ENCODE measurements at regions of chr9 and their contacts with region 1.

Region 1: DNA sequence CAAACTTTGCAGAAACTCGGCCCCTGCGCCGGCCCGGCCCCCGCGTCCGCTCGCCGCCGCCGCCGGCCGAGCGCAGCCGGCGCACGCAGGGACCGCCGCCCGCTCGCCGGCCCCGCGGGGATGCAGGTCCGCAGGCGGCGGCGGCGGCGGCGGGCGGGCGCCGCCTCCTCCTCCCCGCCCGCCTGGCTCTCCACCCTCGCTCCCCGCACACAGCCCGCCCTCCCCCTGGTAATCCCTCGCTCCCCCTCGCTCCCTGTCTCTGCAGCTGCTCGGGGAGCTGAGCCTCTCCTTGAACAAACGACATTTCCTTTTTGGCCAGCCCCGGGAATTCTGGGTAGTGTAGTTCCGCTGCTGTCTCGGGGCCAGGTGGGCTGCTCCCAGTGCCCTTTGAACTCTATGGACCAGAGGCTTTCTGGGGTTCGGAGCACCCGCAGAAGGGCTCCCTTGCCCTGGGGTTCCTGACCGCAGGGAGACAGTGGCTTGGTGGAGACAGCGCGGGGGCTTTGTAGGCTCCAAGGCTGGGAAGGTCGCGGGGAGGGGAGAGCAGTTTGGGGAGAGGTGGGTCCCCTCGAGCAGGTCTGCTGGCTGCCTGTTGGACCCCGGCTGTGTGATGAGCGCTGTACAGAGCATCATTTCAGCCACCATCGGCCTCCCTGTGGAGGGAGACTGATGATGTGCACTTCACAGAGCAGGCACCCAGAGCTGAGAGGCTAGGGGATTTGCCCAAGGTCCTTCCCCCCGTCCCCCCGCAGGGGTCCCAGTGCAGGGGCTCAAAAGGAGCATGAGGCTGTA is 1.8 kb upstream of the FAM78A start:
- DNase-seq: peak; percentile 86
- H3K4me3 ChIP-seq: peak overlapping the region; percentile 90
- H3K27ac ChIP-seq: peak overlapping the region; percentile 54
- H3K4me1 ChIP-seq: peaks cover 17% of the 10 kb centered on the region
- CTCF ChIP-seq: no peak

Region 2: DNA sequence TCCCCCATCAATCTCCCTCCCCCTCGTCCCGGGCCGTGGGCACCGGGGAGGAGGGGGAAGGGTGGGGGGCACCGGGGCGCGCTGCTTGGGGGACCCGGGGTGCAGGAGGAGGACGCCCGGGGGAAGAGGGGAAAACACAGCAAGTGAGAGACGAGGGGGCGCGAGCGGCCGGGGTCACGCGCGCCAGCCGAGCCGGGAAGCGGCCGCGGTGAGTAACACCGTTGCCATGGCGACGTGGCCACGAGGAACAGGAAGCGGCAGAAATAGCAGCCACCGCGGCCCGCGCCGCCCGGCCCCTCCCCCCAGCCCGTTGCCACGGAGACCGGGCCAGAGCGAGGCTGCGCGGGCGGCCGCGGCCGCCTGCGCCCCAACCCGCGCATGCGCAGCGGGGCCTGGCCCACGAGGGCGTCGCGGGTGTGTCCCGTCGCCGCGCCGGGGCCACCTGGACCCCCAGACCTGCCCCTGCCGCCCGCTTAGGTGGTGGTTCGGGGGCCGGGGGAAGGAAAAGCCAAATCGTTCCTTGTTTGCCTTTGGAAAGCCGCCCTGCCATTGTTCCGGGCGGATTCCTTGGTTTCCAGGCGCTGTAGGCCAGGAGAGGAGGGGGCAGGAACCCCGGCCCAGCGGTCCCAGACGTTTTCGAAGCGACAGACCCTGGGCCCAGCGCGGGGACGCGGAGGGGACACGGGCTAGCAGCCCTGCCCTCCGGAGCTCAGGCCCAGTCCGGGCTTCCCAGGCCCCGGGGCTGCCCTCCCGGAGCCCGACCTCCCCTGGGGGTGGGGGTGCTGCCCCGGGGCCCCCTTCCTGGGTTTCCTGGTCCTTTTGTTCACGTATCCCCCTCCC is 1864.3 kb before region 1 on chr9:
- CTCF ChIA-PET with region 1: interaction called, 13 read pairs
- POLR2A ChIA-PET with region 1: no interaction called
- intact Hi-C with region 1: no loop called
- DNase-seq: peak; percentile 98
- H3K4me3 ChIP-seq: peak overlapping the region; percentile 71
- H3K27ac ChIP-seq: peak overlapping the region; percentile 91
- H3K4me1 ChIP-seq: peaks cover 54% of the 10 kb centered on the region
- CTCF ChIP-seq: no peak

Region 3: DNA sequence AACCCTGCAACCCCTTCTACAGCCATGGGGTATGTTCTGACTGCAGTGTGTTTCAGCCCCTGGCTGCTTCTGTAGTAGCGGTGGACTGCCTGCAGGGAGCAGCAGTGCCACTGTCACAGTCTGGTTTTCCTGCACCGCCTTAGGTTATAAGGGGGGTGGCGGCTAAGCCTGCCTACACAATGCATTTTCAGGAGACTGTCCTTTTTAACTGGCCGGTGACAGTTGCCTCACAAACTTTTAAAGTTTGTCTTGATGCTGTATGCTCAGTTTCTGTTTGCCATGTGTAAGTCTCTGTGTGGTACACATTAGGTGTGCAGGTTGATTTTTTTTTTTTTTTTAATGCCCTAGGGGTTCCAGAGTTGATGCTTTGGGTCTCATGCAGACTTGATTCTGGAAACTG is 99.7 kb before region 1 on chr9:
- CTCF ChIA-PET with region 1: interaction called, 4 read pairs
- POLR2A ChIA-PET with region 1: interaction called, 4 read pairs
- intact Hi-C with region 1: loop called (anchors 1 kb)
- DNase-seq: peak; percentile 80
- H3K4me3 ChIP-seq: no peak overlapping the region
- H3K27ac ChIP-seq: no peak overlapping the region
- H3K4me1 ChIP-seq: peaks cover 33% of the 10 kb centered on the region
- CTCF ChIP-seq: peak; percentile 96

Region 4: GRCh38 chr9:131240047-131240921 is 37.8 kb before region 1 on chr9:
- CTCF ChIA-PET with region 1: no interaction called
- POLR2A ChIA-PET with region 1: no interaction called
- intact Hi-C with region 1: loop called (anchors 5 kb)
- DNase-seq: no peak
- H3K4me3 ChIP-seq: no peak overlapping the region
- H3K27ac ChIP-seq: no peak overlapping the region
- H3K4me1 ChIP-seq: peaks cover 9% of the 10 kb centered on the region
- CTCF ChIP-seq: no peak

Region 5: DNA sequence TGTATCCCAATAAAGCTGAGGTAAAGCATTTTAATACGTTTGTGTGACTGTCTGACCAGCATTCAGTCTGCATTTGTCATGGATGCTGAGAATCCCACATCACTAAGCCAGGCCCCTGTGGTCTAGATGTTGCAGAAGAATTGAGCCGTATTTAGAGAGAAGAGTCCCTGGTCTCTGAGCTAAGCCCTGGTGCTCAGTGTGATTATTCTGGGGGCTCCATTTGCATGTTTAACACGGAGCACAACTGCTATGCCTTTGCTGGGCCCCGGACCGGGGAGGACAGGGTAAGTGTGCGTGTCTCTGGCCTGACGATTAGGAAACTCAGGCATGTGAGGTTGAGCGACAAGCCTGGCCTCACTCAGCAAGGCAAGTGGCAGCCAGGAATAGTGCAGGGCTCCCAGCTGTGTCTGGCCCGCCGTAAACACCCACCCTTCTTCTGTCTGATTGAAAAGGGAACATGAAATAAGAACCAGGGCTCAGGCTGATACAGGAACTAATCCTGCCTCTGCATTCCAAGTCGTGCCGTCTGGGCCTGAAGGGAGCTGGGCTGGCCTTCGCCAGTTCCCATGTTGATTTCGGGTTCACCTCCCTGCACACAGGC is 24.1 kb before region 1 on chr9:
- CTCF ChIA-PET with region 1: interaction called, 7 read pairs
- POLR2A ChIA-PET with region 1: interaction called, 132 read pairs
- intact Hi-C with region 1: loop called (anchors 1 kb)
- DNase-seq: peak; percentile 82
- H3K4me3 ChIP-seq: peak overlapping the region; percentile 41
- H3K27ac ChIP-seq: peak overlapping the region; percentile 94
- H3K4me1 ChIP-seq: peaks cover 64% of the 10 kb centered on the region
- CTCF ChIP-seq: no peak

Region 6: DNA sequence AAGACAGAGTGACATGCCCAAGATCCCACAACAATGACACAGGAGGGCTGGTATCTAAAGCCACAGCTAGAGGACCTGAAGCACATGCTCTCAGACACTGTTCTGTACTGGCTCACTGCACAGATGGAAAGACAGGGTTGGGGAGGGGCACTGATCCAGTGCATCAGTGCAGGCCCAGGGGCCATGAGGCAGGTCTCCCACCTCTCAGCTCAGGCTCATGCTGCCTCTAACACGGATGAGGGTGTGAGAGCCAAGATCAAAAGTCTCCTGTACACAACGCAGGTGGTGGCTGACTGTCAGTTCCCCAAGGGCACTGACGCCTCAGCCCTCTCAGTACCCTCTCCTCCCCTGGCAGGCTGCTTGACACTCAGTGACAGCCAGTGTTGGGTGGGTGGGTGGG is 450.9 kb after region 1 on chr9:
- CTCF ChIA-PET with region 1: no interaction called
- POLR2A ChIA-PET with region 1: no interaction called
- intact Hi-C with region 1: no loop called
- DNase-seq: peak; percentile 90
- H3K4me3 ChIP-seq: peak overlapping the region; percentile 62
- H3K27ac ChIP-seq: peak overlapping the region; percentile 100
- H3K4me1 ChIP-seq: peaks cover 97% of the 10 kb centered on the region
- CTCF ChIP-seq: no peak